Mammary epithelial cell (primary cell): ENCODE measurements at regions of chr5 and their contacts with region 1.

Region 1: DNA sequence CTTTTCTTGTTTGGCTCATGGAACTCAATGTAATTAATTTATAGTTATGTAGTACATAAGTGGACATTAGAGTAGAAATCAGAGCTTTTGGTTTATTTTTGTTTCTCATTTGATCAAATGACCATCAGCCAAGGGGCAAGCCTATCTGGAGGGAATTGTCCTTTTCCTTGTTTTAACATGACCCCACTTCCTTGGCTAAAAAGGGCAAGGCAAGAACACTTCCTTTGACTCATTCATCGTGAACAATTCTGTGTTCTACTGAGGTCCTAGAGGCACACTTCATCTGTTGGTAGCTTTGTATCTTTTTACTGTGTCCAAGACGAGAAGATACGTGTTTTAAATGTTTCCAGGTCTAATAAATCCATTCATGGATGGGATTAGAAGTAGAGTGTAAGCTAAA is 148.9 kb downstream of the ARHGEF28 start:
- DNase-seq: no peak
- H3K4me3 ChIP-seq: no peak overlapping the region
- H3K27ac ChIP-seq: no peak overlapping the region
- H3K4me1 ChIP-seq: no peaks in the 10 kb centered on the region
- H3K27me3 ChIP-seq: no peaks in the 10 kb centered on the region
- CTCF ChIP-seq: no peak

Region 2: GRCh38 chr5:73654171-73654811 is 120.6 kb before region 1 on chr5:
- CTCF ChIA-PET with region 1: no interaction called
- dilution Hi-C with region 1: no loop called
- in situ Hi-C with region 1: no loop called
- intact Hi-C with region 1: no loop called
- DNase-seq: peak; percentile 100
- H3K4me3 ChIP-seq: no peak overlapping the region
- H3K27ac ChIP-seq: peak overlapping the region; percentile 99
- H3K4me1 ChIP-seq: peaks cover 68% of the 10 kb centered on the region
- H3K27me3 ChIP-seq: no peaks in the 10 kb centered on the region
- CTCF ChIP-seq: no peak

Region 3: GRCh38 chr5:73673161-73673591 is 101.7 kb before region 1 on chr5:
- CTCF ChIA-PET with region 1: no interaction called
- dilution Hi-C with region 1: no loop called
- in situ Hi-C with region 1: no loop called
- intact Hi-C with region 1: no loop called
- DNase-seq: peak; percentile 67
- H3K4me3 ChIP-seq: no peak overlapping the region
- H3K27ac ChIP-seq: peak overlapping the region; percentile 86
- H3K4me1 ChIP-seq: peaks cover 33% of the 10 kb centered on the region
- H3K27me3 ChIP-seq: no peaks in the 10 kb centered on the region
- CTCF ChIP-seq: peak in 1 of 2 donors; percentile 8

Region 4: GRCh38 chr5:73709536-73710129 is 65.3 kb before region 1 on chr5:
- CTCF ChIA-PET with region 1: no interaction called
- dilution Hi-C with region 1: loop called (anchors 5 kb)
- in situ Hi-C with region 1: no loop called
- intact Hi-C with region 1: no loop called
- DNase-seq: peak; percentile 91
- H3K4me3 ChIP-seq: no peak overlapping the region
- H3K27ac ChIP-seq: peak overlapping the region; percentile 60
- H3K4me1 ChIP-seq: no peaks in the 10 kb centered on the region
- H3K27me3 ChIP-seq: no peaks in the 10 kb centered on the region
- CTCF ChIP-seq: no peak